IMR-90 (cell line): ENCODE measurements at regions of chr13 and their contacts with region 1.

Region 1: GRCh38 chr13:30132623-30133553 is 174.5 kb downstream of the KATNAL1 start:
- DNase-seq: peak; percentile 89
- ATAC-seq: peak; percentile 99
- H3K4me3 ChIP-seq: no peak overlapping the region
- H3K27ac ChIP-seq: no peak overlapping the region
- H3K4me1 ChIP-seq: peaks cover 8% of the 10 kb centered on the region
- H3K27me3 ChIP-seq: 0 out of 2 replicates have a peak, but pooled peaks cover 2% of the 10 kb centered on the region
- CTCF ChIP-seq: peak; percentile 94
- POLR2A ChIP-seq: peak; percentile 43; the same call in 1 of the 2 replicates
- RAD21 ChIP-seq: peak; percentile 96

Region 2: GRCh38 chr13:30002577-30002976 is 130.3 kb before region 1 on chr13:
- CTCF ChIA-PET with region 1: no interaction called
- POLR2A ChIA-PET with region 1: no interaction called
- dilution Hi-C with region 1: no loop called
- in situ Hi-C with region 1: no loop called
- intact Hi-C with region 1: no loop called
- DNase-seq: peak; percentile 85
- ATAC-seq: peak; percentile 85
- H3K4me3 ChIP-seq: no peak overlapping the region
- H3K27ac ChIP-seq: no peak overlapping the region
- H3K4me1 ChIP-seq: peaks cover 14% of the 10 kb centered on the region; the same call in 1 of the 2 replicates
- H3K27me3 ChIP-seq: no peaks in the 10 kb centered on the region
- CTCF ChIP-seq: no peak
- POLR2A ChIP-seq: no peak
- RAD21 ChIP-seq: no peak; the same call in 1 of the 2 replicates

Region 3: DNA sequence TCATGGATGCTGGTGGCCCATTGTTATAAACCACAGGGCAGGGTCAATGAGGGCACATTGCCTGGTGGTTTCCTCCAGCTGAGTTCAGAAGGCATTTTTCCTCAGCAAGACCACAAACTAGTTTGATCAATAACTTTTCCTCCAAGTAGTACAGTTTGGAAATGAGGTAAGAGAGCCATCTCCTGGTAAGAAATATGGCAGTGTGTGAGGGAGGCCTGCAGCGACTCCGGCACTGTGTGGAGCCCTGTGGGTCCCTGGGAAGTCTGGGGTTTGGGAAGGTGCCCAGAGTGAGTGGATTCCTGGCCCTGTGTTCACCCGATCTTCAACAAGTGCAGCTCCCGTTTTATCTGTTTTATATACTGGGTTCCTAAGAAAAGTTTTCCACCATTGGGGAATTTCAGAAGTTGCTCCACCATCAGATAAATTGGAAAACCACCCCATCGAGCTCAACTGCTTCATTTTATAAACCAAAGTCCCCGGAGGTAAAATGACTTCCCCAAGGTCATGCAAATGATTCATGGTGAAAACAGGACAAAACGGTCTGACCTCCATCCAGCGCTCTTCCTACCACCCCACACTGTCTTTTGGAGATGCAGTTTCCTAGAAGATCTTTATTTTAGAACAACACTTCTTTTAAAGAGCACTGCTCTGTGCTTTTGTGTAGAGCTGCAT is 26.0 kb after region 1 on chr13:
- CTCF ChIA-PET with region 1: interaction called, 20 read pairs
- POLR2A ChIA-PET with region 1: no interaction called
- dilution Hi-C with region 1: no loop called
- in situ Hi-C with region 1: no loop called
- intact Hi-C with region 1: loop called (anchors 1 kb)
- DNase-seq: peak; percentile 71
- ATAC-seq: peak; percentile 89
- H3K4me3 ChIP-seq: no peak overlapping the region
- H3K27ac ChIP-seq: no peak overlapping the region
- H3K4me1 ChIP-seq: no peaks in the 10 kb centered on the region
- H3K27me3 ChIP-seq: peaks cover 4% of the 10 kb centered on the region
- CTCF ChIP-seq: peak; percentile 69
- POLR2A ChIP-seq: no peak
- RAD21 ChIP-seq: peak; percentile 67

Region 4: DNA sequence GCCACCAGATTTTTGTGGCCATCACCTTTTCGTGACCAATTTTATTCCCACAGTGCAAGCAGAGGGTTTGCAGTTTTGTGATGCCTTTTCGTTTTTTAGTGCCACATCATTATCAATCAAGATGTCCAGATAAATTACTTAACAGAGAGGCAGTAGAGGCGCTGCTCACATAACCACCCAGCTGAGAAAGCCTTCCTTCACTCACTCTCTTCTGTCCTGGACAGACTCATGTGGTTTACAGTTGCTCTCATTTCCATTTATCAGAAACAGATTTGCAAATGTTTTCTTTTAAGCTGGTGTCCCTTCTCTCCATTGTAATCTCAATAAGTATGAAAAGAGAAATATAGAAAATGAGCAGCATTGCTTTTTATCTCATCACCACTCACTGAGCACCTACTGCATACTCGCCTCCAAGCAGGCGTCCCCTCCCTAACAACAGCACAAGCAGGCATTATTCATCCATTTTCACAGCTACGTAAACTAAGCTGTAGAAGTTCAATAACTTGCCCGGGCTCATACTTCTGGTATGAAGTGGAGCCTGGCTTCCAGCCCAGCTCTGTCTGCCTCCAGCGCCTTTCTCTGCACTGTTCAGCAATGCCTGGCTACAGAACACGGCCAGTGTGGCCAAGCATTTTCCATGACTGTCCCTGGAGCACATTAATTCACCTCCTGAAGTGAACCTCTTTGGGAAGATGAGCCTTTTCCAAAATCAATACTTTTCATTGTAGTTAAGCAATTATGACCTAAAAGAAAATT is 209.1 kb after region 1 on chr13:
- CTCF ChIA-PET with region 1: interaction called, 9 read pairs
- POLR2A ChIA-PET with region 1: no interaction called
- dilution Hi-C with region 1: no loop called
- in situ Hi-C with region 1: no loop called
- intact Hi-C with region 1: loop called (anchors 5 kb)
- DNase-seq: peak; percentile 94
- ATAC-seq: peak; percentile 89
- H3K4me3 ChIP-seq: no peak overlapping the region
- H3K27ac ChIP-seq: peak overlapping the region; percentile 60; the same call in 1 of the 2 replicates
- H3K4me1 ChIP-seq: peaks cover 32% of the 10 kb centered on the region
- H3K27me3 ChIP-seq: no peaks in the 10 kb centered on the region
- CTCF ChIP-seq: no peak
- POLR2A ChIP-seq: no peak
- RAD21 ChIP-seq: no peak

Region 5: GRCh38 chr13:30443957-30444404 is 311.1 kb after region 1 on chr13:
- CTCF ChIA-PET with region 1: interaction called, 3 read pairs
- POLR2A ChIA-PET with region 1: no interaction called
- dilution Hi-C with region 1: no loop called
- in situ Hi-C with region 1: loop called (anchors 10 kb)
- intact Hi-C with region 1: loop called (anchors 5 kb)
- DNase-seq: no peak
- ATAC-seq: no peak
- H3K4me3 ChIP-seq: no peak overlapping the region
- H3K27ac ChIP-seq: no peak overlapping the region
- H3K4me1 ChIP-seq: peaks cover 7% of the 10 kb centered on the region
- H3K27me3 ChIP-seq: no peaks in the 10 kb centered on the region
- CTCF ChIP-seq: no peak
- POLR2A ChIP-seq: no peak
- RAD21 ChIP-seq: no peak

Region 6: GRCh38 chr13:30572859-30573275 is 440.0 kb after region 1 on chr13:
- CTCF ChIA-PET with region 1: interaction called, 5 read pairs
- POLR2A ChIA-PET with region 1: no interaction called
- dilution Hi-C with region 1: no loop called
- in situ Hi-C with region 1: no loop called
- intact Hi-C with region 1: loop called (anchors 10 kb)
- DNase-seq: peak; percentile 57
- ATAC-seq: peak; percentile 58
- H3K4me3 ChIP-seq: peak overlapping the region; percentile 48; the same call in 1 of the 2 replicates
- H3K27ac ChIP-seq: peak overlapping the region; percentile 51; the same call in 1 of the 2 replicates
- H3K4me1 ChIP-seq: peaks cover 10% of the 10 kb centered on the region
- H3K27me3 ChIP-seq: no peaks in the 10 kb centered on the region
- CTCF ChIP-seq: peak; percentile 49
- POLR2A ChIP-seq: no peak
- RAD21 ChIP-seq: peak; percentile 52

Region 7: GRCh38 chr13:30690282-30691188 is 557.6 kb after region 1 on chr13:
- CTCF ChIA-PET with region 1: no interaction called
- POLR2A ChIA-PET with region 1: no interaction called
- dilution Hi-C with region 1: no loop called
- in situ Hi-C with region 1: no loop called
- intact Hi-C with region 1: loop called (anchors 10 kb)
- DNase-seq: peak; percentile 99
- ATAC-seq: peak; percentile 96
- H3K4me3 ChIP-seq: peak overlapping the region; percentile 31
- H3K27ac ChIP-seq: peak overlapping the region; percentile 85
- H3K4me1 ChIP-seq: peaks cover 9% of the 10 kb centered on the region
- H3K27me3 ChIP-seq: no peaks in the 10 kb centered on the region
- CTCF ChIP-seq: no peak
- POLR2A ChIP-seq: peak; percentile 44; the same call in 1 of the 2 replicates
- RAD21 ChIP-seq: no peak; the same call in 1 of the 2 replicates

Region 8: GRCh38 chr13:30865123-30866049 is 732.5 kb after region 1 on chr13:
- CTCF ChIA-PET with region 1: no interaction called
- POLR2A ChIA-PET with region 1: no interaction called
- dilution Hi-C with region 1: no loop called
- in situ Hi-C with region 1: no loop called
- intact Hi-C with region 1: loop called (anchors 10 kb)
- DNase-seq: peak; percentile 96
- ATAC-seq: peak; percentile 55
- H3K4me3 ChIP-seq: peak overlapping the region; percentile 30; the same call in 1 of the 2 replicates
- H3K27ac ChIP-seq: peak overlapping the region; percentile 92
- H3K4me1 ChIP-seq: peaks cover 46% of the 10 kb centered on the region
- H3K27me3 ChIP-seq: no peaks in the 10 kb centered on the region
- CTCF ChIP-seq: peak; percentile 90
- POLR2A ChIP-seq: peak; percentile 77; the same call in 1 of the 2 replicates
- RAD21 ChIP-seq: peak; percentile 92